ENCODE measurements at regions of chr13 and their contacts with region 1.

Region 1: DNA sequence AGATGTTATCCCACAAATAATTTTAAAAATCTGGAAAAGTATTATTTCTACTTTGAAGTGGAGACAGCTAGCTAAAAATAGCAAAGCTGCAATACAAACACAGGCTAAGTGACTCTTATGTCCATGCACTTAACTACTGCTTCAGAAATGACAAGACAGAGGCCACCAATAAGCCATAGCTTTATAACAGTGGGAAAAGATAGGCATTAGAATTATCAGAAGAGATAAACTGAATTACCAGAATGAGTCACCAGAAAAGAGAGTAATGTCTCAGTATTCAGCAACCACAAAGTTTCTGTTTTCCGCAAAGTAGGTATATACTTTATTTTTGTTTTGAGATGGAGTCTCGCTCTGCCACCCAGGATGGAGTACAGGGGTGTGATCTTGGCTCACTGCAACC is 17.1 kb downstream of the CLN5 start:
- DNase-seq: peak; percentile 19
- ATAC-seq: peak; percentile 81
- H3K4me3 Mint-ChIP-seq: no peak overlapping the region
- H3K27ac Mint-ChIP-seq: peak overlapping the region; percentile 74
- H3K4me1 Mint-ChIP-seq: peaks cover 39% of the 10 kb centered on the region
- H3K27me3 Mint-ChIP-seq: no peaks in the 10 kb centered on the region

Region 2: DNA sequence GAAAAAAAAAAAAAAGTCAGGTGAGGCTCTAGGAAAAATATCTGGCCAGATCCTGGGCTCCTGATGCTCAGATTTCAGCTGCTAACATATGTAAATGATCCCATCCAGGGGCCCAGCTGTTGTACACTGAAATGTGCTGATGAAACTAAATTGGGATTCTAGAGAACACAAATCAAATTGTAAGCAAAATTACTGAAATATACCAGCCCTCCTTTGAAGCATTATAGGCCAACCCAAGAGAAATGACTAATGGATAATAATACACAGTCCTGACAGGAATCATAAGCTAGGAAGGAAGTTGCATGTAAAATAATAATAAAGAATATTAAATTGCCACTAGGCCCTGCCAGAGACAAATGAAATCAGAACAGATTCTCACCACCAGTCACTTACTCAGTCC is 140.6 kb before region 1 on chr13:
- CTCF ChIA-PET with region 1: no interaction called
- POLR2A ChIA-PET with region 1: no interaction called
- intact Hi-C with region 1: no loop called
- DNase-seq: no peak
- ATAC-seq: no peak
- H3K4me3 Mint-ChIP-seq: no peak overlapping the region
- H3K27ac Mint-ChIP-seq: no peak overlapping the region
- H3K4me1 Mint-ChIP-seq: no peaks in the 10 kb centered on the region
- H3K27me3 Mint-ChIP-seq: peaks cover 13% of the 10 kb centered on the region

Region 3: DNA sequence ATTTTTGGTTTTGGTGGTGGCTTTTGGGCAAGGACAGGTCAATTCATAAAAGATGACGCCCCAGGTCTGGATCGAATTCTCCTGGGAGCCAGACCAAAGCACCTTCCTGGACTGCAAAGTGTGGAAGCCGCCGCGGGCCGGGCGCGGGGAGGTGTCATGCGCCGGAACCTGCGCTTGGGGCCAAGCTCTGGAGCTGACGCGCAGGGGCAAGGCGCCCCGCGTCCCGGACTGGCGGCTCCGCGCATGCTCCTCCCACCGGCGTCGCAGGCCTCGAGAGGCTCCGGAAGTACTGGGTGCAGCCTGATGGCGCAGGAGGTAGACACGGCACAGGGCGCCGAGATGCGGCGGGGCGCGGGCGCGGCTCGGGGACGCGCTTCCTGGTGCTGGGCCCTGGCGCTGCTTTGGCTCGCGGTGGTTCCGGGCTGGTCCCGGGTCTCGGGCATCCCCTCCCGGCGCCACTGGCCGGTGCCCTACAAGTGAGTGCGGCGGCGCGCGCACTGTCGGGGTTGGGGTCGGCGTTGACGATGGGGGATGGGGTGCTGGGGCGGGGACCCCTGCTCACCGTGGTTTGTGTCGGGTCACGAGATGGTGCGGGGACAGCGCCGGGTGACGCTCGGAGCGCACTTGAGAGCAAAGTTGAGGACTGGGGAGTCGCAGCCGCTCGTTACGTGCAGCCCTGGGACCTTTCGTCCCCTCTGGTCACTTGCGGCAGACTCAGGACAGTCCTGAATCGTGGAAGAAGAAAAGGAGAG is 17.0 kb before region 1 on chr13 and contains the start of gene CLN5:
- CTCF ChIA-PET with region 1: interaction called, 29 read pairs
- POLR2A ChIA-PET with region 1: interaction called, 4 read pairs
- intact Hi-C with region 1: loop called (anchors 1 to 2 kb)
- DNase-seq: peak; percentile 97
- ATAC-seq: peak; percentile 93
- H3K4me3 Mint-ChIP-seq: peak within 1 kb of the TSS; percentile 97
- H3K27ac Mint-ChIP-seq: peak within 1 kb of the TSS; percentile 99
- H3K4me1 Mint-ChIP-seq: peaks cover 36% of the 10 kb centered on the region
- H3K27me3 Mint-ChIP-seq: peaks cover 3% of the 10 kb centered on the region
- total RNA-seq, gene CLN5: 14.5 to 14.9 TPM

Region 4: GRCh38 chr13:77065461-77066147 is 56.6 kb after region 1 on chr13:
- CTCF ChIA-PET with region 1: no interaction called
- POLR2A ChIA-PET with region 1: no interaction called
- intact Hi-C with region 1: no loop called
- DNase-seq: no peak
- ATAC-seq: no peak
- H3K4me3 Mint-ChIP-seq: no peak overlapping the region
- H3K27ac Mint-ChIP-seq: peak overlapping the region; percentile 5
- H3K4me1 Mint-ChIP-seq: peaks cover 5% of the 10 kb centered on the region
- H3K27me3 Mint-ChIP-seq: no peaks in the 10 kb centered on the region